HepG2 (cell line): ENCODE measurements at regions of chr12 and their contacts with region 1.

Region 1: GRCh38 chr12:32399337-32400113 is at the start of gene FGD4:
- DNase-seq: peak; percentile 69
- ATAC-seq: peak; percentile 93
- H3K4me3 ChIP-seq: peak within 1 kb of the TSS; percentile 86 to 92 (median 87)
- H3K27ac ChIP-seq: no peak within 1 kb of the TSS
- H3K4me1 ChIP-seq: peaks cover 23% of the 10 kb centered on the region
- H3K27me3 ChIP-seq: peaks cover 0 to 8% of the 10 kb centered on the region in 2 experiments; a peak in 1 of 5 replicates
- CTCF ChIP-seq: peak; percentile 77
- EP300 ChIP-seq: no peak
- POLR2A ChIP-seq: no peak
- RAD21 ChIP-seq: peak; percentile 70; the same call in 1 of the 2 replicates
- total RNA-seq, gene FGD4: 4.6 and 5.3 TPM in 2 replicates

Region 2: DNA sequence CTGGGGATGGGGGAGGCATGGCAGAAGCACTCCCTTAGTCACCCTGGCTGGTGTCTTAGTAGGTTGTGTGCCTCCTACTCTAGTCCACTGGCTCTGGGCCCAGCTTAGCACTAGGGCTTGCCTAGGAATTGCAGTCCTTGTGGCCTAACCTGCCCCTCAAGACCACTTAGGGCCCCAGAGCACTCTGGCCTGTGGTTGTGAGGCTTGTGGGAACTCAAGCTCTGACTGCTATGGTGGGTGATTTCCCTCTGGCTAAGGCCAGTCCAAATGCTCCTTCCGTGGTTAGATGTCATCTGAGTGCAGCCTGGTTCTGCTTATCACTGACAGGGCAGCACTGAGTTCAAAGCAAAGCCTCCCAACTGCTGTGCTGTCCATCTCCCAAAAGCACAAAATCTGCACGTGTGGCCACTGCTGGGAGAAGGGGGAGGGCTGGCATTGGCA is 20.0 kb after region 1 on chr12:
- CTCF ChIA-PET with region 1: no interaction called
- POLR2A ChIA-PET with region 1: no interaction called
- in situ Hi-C with region 1: no loop called
- intact Hi-C with region 1: loop called (anchors 2 kb)
- DNase-seq: no peak
- ATAC-seq: peak; percentile 38; the same call in 2 of the 3 replicates
- H3K4me3 ChIP-seq: no peak overlapping the region
- H3K27ac ChIP-seq: no peak overlapping the region
- H3K4me1 ChIP-seq: no peaks in the 10 kb centered on the region
- H3K27me3 ChIP-seq: no peaks in the 10 kb centered on the region
- CTCF ChIP-seq: no peak
- EP300 ChIP-seq: no peak
- POLR2A ChIP-seq: no peak
- RAD21 ChIP-seq: no peak

Region 3: GRCh38 chr12:32437095-32437515 is 37.6 kb after region 1 on chr12:
- CTCF ChIA-PET with region 1: no interaction called
- POLR2A ChIA-PET with region 1: no interaction called
- in situ Hi-C with region 1: no loop called
- intact Hi-C with region 1: loop called (anchors 5 kb)
- DNase-seq: peak; percentile 90
- ATAC-seq: peak; percentile 92
- H3K4me3 ChIP-seq: peak overlapping the region in 1 of 3 experiments; percentile 12; a peak in 1 of 6 replicates
- H3K27ac ChIP-seq: no peak overlapping the region
- H3K4me1 ChIP-seq: peaks cover 19% of the 10 kb centered on the region
- H3K27me3 ChIP-seq: no peaks in the 10 kb centered on the region
- CTCF ChIP-seq: no peak
- EP300 ChIP-seq: peak in 1 of 2 experiments; percentile 73; a peak in 1 of 4 replicates
- POLR2A ChIP-seq: no peak
- RAD21 ChIP-seq: no peak

Region 4: DNA sequence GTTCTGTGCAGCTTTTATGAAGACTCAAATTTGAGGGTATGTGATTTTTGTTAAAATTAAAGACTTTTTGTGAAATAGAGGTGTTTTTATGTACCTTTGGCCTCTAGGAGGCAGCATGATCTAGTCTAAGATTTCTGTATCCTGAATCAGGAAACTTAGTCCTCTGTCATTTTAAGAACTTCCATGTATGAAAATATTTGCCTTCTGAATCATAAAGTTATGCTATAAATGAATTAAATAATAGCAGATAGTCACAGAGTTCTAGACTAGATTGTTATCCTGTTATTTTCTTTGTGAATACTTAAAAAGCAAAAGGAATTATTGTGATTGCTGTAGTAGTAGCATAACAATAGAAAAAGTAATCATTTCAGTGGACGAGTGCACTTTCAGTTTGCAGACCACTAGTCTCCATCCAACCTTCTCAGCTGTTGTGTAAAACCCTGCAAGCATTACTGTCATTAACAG is 56.1 kb after region 1 on chr12:
- CTCF ChIA-PET with region 1: no interaction called
- POLR2A ChIA-PET with region 1: no interaction called
- in situ Hi-C with region 1: no loop called
- intact Hi-C with region 1: no loop called
- DNase-seq: peak; percentile 55
- ATAC-seq: no peak
- H3K4me3 ChIP-seq: no peak overlapping the region
- H3K27ac ChIP-seq: no peak overlapping the region
- H3K4me1 ChIP-seq: peaks cover 11% of the 10 kb centered on the region
- H3K27me3 ChIP-seq: no peaks in the 10 kb centered on the region
- CTCF ChIP-seq: peak; percentile 73
- EP300 ChIP-seq: no peak
- POLR2A ChIP-seq: no peak
- RAD21 ChIP-seq: peak; percentile 59; the same call in 1 of the 2 replicates

Region 5: GRCh38 chr12:32679091-32679919 is 279.8 kb after region 1 on chr12 and contains the start of gene DNM1L:
- CTCF ChIA-PET with region 1: no interaction called
- POLR2A ChIA-PET with region 1: no interaction called
- in situ Hi-C with region 1: no loop called
- intact Hi-C with region 1: loop called (anchors 10 kb)
- DNase-seq: peak; percentile 93
- ATAC-seq: peak; percentile 96
- H3K4me3 ChIP-seq: peak within 1 kb of the TSS; percentile 84 to 85 (median 84)
- H3K27ac ChIP-seq: peak within 1 kb of the TSS; percentile 92
- H3K4me1 ChIP-seq: peaks cover 64% of the 10 kb centered on the region
- H3K27me3 ChIP-seq: no peaks in the 10 kb centered on the region; a peak in 1 of 5 replicates
- CTCF ChIP-seq: 0 out of 2 replicates have a peak, but pooled peaks have one; percentile 2
- EP300 ChIP-seq: peak in 1 of 2 experiments; percentile 13; a peak in 1 of 4 replicates
- POLR2A ChIP-seq: peak; percentile 89 to 97
- RAD21 ChIP-seq: peak; percentile 33; the same call in 1 of the 2 replicates
- total RNA-seq, gene DNM1L: 65.8 and 81.5 TPM in 2 replicates